AG04450 (cell line): ENCODE measurements at regions of chr20 and their contacts with region 1.

Region 1: DNA sequence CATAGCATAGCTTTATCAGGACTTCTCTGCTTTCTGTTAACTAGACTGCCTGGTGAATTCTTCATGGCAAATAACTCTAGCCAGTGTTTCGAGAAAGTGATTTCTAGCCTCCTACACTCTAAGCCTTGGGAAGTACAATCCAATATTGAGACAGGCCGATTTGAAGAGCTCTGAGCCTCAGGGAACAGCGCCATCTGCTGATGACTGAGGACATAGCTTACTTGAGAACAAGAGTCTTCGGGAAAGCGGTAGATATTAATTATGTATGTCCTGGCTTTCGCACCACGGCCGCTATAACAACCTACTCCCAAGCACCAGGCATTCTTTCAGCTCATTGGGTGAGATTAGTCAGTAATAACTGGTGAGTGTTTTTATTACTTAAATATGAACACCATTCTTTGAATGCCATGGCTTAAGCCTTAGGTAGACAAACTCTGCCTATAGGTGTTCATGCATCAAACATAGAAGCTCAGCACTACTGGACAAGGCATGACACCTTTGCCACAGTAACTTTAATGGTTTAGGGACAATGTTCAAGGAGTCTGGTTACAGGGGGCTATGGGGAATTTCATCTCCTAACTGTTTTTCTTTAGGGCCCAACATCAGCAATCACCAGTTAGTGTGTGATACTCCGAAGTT is 518.6 kb downstream of the BMP2 start:
- DNase-seq: peak; percentile 23
- H3K4me3 ChIP-seq: no peak overlapping the region
- H3K27ac ChIP-seq: no peak overlapping the region
- H3K27me3 ChIP-seq: no peaks in the 10 kb centered on the region
- CTCF ChIP-seq: peak; percentile 84

Region 2: GRCh38 chr20:6140947-6141346 is 1145.1 kb before region 1 on chr20:
- CTCF ChIA-PET with region 1: interaction called, 10 read pairs
- POLR2A ChIA-PET with region 1: no interaction called
- DNase-seq: no peak
- H3K4me3 ChIP-seq: no peak overlapping the region
- H3K27ac ChIP-seq: no peak overlapping the region
- H3K27me3 ChIP-seq: peaks cover 2% of the 10 kb centered on the region
- CTCF ChIP-seq: peak; percentile 16; the same call in 1 of the 2 replicates

Region 3: GRCh38 chr20:6178537-6178936 is 1107.5 kb before region 1 on chr20:
- CTCF ChIA-PET with region 1: interaction called, 21 read pairs
- POLR2A ChIA-PET with region 1: no interaction called
- DNase-seq: peak; percentile 3
- H3K4me3 ChIP-seq: no peak overlapping the region
- H3K27ac ChIP-seq: no peak overlapping the region
- H3K27me3 ChIP-seq: no peaks in the 10 kb centered on the region
- CTCF ChIP-seq: peak; percentile 56

Region 4: DNA sequence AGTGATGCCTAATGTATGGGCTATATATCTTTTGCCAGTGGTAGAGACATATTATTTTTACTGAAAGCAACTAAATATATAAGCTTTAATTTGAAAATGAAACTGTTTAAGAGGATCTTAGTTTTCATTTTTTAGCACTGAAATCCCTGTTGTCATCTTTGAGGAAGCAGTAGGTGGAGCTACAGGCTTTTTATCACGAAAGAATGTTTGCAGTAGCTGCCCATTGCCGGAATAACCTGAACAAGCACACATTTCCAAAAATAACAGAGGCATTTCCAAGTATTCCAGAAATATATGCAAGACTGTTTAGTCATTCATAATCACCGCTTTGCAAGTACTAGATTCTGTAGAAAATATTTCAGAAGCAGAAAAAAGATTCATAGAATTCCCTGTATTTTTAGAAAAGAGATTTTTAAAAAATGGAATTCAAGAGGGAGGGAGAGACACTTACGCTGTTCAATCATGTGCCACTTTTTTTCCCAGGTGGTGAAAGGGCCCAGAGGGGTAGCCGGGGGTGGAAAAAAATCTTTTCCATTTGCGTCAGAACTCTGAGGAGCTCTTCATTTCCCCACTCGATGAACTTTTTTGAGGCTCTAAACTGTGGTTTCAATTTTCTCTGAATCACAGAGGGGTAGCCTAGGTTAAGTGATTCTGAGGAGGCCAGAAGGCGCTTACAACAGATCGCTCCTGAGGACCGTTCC is 1020.7 kb before region 1 on chr20:
- CTCF ChIA-PET with region 1: interaction called, 25 read pairs
- POLR2A ChIA-PET with region 1: no interaction called
- DNase-seq: peak; percentile 38
- H3K4me3 ChIP-seq: peak overlapping the region; percentile 25; the same call in 1 of the 2 replicates
- H3K27ac ChIP-seq: no peak overlapping the region
- H3K27me3 ChIP-seq: no peaks in the 10 kb centered on the region
- CTCF ChIP-seq: peak; percentile 60

Region 5: DNA sequence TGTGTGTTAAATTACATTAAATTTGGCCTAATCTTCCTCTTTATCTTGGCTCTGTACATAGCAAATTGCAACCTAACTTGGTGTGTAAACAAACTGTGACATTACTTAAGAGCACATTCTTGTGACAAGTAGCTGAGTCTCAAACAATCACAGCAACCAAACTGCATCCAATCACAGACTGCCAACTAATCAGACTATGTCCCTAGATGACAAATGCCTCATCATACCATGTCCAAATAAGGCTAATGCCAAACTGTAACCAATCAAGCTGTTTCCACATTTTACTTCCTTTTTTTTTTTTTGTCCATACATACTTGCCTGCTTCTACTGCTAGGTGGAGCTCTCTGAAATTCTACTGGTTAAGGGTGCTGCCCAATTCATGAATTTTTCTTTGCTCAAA is 309.5 kb before region 1 on chr20:
- CTCF ChIA-PET with region 1: no interaction called
- POLR2A ChIA-PET with region 1: no interaction called
- DNase-seq: no peak
- H3K4me3 ChIP-seq: no peak overlapping the region
- H3K27ac ChIP-seq: no peak overlapping the region
- H3K27me3 ChIP-seq: no peaks in the 10 kb centered on the region
- CTCF ChIP-seq: no peak

Region 6: DNA sequence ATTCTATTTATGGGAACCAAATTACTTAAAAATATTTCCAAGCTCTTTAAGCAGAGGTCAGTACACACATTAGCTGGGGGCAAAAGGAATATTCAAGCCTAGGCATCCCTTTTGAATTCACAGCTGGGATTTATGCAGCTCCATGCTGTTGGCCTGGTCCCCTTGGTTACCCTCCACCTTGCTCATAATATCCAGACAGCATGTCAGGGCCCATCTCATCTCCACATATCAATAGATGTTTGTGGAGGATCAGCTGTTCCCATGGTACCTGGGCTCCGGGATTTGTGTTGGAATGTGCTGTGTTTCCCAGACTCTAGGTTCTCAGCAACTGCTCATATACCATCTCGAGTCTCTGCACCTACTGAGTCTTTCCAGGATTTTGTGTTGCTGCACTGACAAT is 16.2 kb after region 1 on chr20:
- CTCF ChIA-PET with region 1: interaction called, 17 read pairs
- POLR2A ChIA-PET with region 1: no interaction called
- DNase-seq: no peak
- H3K4me3 ChIP-seq: no peak overlapping the region
- H3K27ac ChIP-seq: no peak overlapping the region
- H3K27me3 ChIP-seq: no peaks in the 10 kb centered on the region
- CTCF ChIP-seq: no peak